WTC11 (cell line): ENCODE measurements at regions of chr12 and their contacts with region 1.

Region 1: GRCh38 chr12:54658306-54659264 is 10.4 kb upstream of the DCD start:
- DNase-seq: peak; percentile 87
- ATAC-seq: peak; percentile 94
- H3K4me3 Mint-ChIP-seq: peak overlapping the region; percentile 56
- H3K27ac Mint-ChIP-seq: peak overlapping the region; percentile 60; the same call in 1 of the 2 replicates
- H3K4me1 Mint-ChIP-seq: peaks cover 16% of the 10 kb centered on the region
- H3K27me3 Mint-ChIP-seq: peaks cover 15% of the 10 kb centered on the region
- CTCF ChIP-seq: peak; percentile 71

Region 2: DNA sequence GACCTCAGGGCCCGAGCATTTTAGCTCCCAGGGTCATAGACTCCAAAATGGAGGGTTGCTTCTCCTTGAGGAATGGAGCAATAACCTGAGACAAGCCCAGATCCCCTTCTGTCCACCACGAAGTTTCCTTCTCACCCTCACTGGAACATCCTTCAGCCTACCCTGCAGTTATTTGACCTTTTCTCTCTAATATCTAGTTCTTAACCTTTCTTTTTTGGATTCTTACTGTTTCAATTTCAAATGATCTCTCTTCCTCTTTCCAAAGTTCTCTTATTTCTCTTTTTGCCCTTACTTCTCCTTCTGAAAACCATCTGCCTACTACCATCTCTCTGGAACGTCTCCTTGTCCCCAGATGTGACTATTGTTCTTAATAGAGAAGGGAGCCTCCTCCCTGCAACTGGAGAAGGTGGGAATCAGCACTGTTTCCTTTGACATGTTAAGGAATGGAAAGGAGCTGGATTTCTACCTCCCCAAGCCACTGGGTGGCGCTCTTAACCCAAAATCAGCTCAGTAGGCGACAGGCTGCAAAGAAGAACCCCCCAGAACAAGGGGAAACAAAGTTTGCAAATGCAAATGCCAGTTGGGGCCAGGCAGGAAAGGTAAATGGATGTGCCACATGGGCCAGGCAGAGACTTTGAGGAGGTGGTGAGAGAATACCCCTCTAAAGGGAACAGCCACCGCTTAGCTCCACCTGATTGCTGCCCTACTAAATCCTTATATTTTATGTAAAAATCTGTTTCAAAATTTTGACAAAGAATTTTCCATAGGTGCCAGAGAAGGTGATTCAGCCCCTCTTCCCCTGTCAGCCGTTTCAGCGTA is 131.6 kb before region 1 on chr12:
- CTCF ChIA-PET with region 1: interaction called, 35 read pairs
- POLR2A ChIA-PET with region 1: no interaction called
- DNase-seq: peak; percentile 92
- ATAC-seq: peak; percentile 92
- H3K4me3 Mint-ChIP-seq: no peak overlapping the region
- H3K27ac Mint-ChIP-seq: no peak overlapping the region
- H3K4me1 Mint-ChIP-seq: peaks cover 12% of the 10 kb centered on the region
- H3K27me3 Mint-ChIP-seq: peaks cover 63% of the 10 kb centered on the region
- CTCF ChIP-seq: peak; percentile 90

Region 3: GRCh38 chr12:54596526-54596946 is 62.0 kb before region 1 on chr12:
- CTCF ChIA-PET with region 1: interaction called, 26 read pairs
- POLR2A ChIA-PET with region 1: no interaction called
- DNase-seq: peak; percentile 86
- ATAC-seq: peak; percentile 94
- H3K4me3 Mint-ChIP-seq: no peak overlapping the region
- H3K27ac Mint-ChIP-seq: no peak overlapping the region
- H3K4me1 Mint-ChIP-seq: peaks cover 5% of the 10 kb centered on the region
- H3K27me3 Mint-ChIP-seq: peaks cover 82% of the 10 kb centered on the region
- CTCF ChIP-seq: peak; percentile 77

Region 4: DNA sequence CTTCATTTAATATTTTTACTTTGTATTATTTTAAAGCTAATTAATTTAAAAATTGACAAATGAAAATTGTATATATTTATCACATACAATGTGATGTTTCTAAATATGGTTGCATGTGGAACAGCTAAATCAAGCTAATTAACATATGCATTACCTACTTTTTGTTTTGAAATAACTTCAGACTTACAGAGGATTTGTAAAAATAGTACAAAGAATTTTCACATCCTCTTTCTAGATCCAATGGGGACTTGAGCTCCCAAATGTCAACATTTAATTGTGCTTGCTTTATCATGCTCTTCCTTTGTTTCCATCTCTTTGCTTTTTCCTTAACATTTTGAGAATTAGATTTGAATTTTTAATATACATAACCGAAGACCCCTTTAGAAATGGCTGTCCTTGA is 17.0 kb before region 1 on chr12:
- CTCF ChIA-PET with region 1: interaction called, 12 read pairs
- POLR2A ChIA-PET with region 1: no interaction called
- DNase-seq: no peak
- ATAC-seq: no peak
- H3K4me3 Mint-ChIP-seq: no peak overlapping the region
- H3K27ac Mint-ChIP-seq: no peak overlapping the region
- H3K4me1 Mint-ChIP-seq: peaks cover 4% of the 10 kb centered on the region
- H3K27me3 Mint-ChIP-seq: peaks cover 29% of the 10 kb centered on the region
- CTCF ChIP-seq: no peak

Region 5: GRCh38 chr12:54701940-54702592 is 43.5 kb after region 1 on chr12:
- CTCF ChIA-PET with region 1: interaction called, 43 read pairs
- POLR2A ChIA-PET with region 1: no interaction called
- DNase-seq: no peak
- ATAC-seq: peak; percentile 69
- H3K4me3 Mint-ChIP-seq: no peak overlapping the region
- H3K27ac Mint-ChIP-seq: no peak overlapping the region
- H3K4me1 Mint-ChIP-seq: peaks cover 22% of the 10 kb centered on the region
- H3K27me3 Mint-ChIP-seq: no peaks in the 10 kb centered on the region
- CTCF ChIP-seq: peak; percentile 43

Region 6: DNA sequence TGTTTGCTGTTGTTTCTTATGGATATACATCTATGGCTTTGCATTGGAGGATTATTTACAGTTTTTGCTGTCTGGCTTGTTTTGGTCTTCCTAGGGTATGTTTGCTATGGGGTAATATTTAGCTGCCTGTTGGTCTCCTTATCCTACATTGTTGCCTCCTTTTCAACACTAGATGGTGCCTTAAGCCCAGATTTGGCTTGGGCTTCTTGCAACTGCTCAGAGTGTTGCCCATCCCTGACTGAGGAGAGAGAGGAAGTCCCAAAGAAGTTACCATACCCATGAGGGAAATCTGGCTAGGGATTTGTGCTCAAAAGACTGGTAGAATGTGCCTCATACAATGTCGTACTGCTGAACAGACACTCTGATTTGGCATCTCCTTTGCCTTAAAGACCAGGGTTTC is 101.2 kb after region 1 on chr12:
- CTCF ChIA-PET with region 1: interaction called, 11 read pairs
- POLR2A ChIA-PET with region 1: no interaction called
- DNase-seq: peak; percentile 43
- ATAC-seq: peak; percentile 99
- H3K4me3 Mint-ChIP-seq: no peak overlapping the region
- H3K27ac Mint-ChIP-seq: no peak overlapping the region
- H3K4me1 Mint-ChIP-seq: no peaks in the 10 kb centered on the region
- H3K27me3 Mint-ChIP-seq: no peaks in the 10 kb centered on the region
- CTCF ChIP-seq: no peak